Dendritic cell treated with granulocyte-macrophage colony-stimulating factor and Interleukin-4, amounts not matched to agents 40 ng/mL and 50 ng/mL, for 4 days (primary cell): ENCODE measurements at regions of chr4 and their contacts with region 1.

Region 1: GRCh38 chr4:157217708-157218107 is 2.8 kb upstream of the GRIA2 start:
- H3K4me3 Mint-ChIP-seq: no peak overlapping the region
- H3K27ac Mint-ChIP-seq: no peak overlapping the region
- H3K4me1 Mint-ChIP-seq: peaks cover 11% of the 10 kb centered on the region
- H3K27me3 Mint-ChIP-seq: peaks cover 37% of the 10 kb centered on the region

Region 2: DNA sequence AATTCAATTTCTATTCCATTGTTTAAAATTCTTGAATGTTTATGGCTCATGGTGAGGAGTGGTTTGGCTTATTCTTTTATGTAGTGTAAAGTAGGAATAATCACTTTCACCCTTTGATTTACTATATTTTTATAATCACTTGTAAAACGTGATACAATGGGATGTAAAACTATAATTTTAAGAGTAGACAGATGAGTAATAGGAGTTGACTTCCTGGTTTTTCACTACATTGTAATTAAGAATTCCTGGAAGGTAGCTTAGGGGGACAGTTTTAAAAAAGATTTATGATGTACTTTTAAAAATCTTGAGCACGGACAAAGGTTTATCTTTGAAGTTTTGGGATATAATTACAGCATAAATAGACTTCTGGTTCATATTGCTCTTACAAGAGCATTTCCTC is 311.4 kb before region 1 on chr4:
- intact Hi-C with region 1: no loop called
- H3K4me3 Mint-ChIP-seq: no peak overlapping the region
- H3K27ac Mint-ChIP-seq: no peak overlapping the region
- H3K4me1 Mint-ChIP-seq: peaks cover 21% of the 10 kb centered on the region
- H3K27me3 Mint-ChIP-seq: no peaks in the 10 kb centered on the region

Region 3: DNA sequence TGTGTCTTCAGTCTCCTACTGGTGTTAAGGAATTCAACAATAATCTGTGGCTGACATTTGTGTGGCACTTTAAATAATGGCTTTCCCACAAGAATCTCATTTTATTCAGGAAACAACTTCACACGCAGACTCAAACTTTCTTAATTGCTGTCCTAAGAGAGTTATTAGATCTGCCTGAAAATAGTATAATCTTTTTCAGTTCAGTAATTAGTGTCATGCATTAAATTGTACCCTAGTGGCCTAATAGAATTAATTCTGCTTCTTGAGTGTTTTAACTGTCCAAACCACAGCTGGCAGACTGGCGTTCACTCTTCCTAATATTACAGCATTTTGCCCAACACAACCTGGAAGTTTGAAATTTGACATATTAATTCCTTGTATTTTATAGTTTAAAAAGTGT is 110.0 kb after region 1 on chr4:
- intact Hi-C with region 1: no loop called
- H3K4me3 Mint-ChIP-seq: no peak overlapping the region
- H3K27ac Mint-ChIP-seq: no peak overlapping the region
- H3K4me1 Mint-ChIP-seq: no peaks in the 10 kb centered on the region
- H3K27me3 Mint-ChIP-seq: no peaks in the 10 kb centered on the region

Region 4: GRCh38 chr4:157978680-157979361 is 761.1 kb after region 1 on chr4:
- intact Hi-C with region 1: loop called (anchors 2 kb)
- H3K4me3 Mint-ChIP-seq: peak overlapping the region; percentile 28
- H3K27ac Mint-ChIP-seq: no peak overlapping the region
- H3K4me1 Mint-ChIP-seq: peaks cover 16% of the 10 kb centered on the region
- H3K27me3 Mint-ChIP-seq: peaks cover 2% of the 10 kb centered on the region

Region 5: DNA sequence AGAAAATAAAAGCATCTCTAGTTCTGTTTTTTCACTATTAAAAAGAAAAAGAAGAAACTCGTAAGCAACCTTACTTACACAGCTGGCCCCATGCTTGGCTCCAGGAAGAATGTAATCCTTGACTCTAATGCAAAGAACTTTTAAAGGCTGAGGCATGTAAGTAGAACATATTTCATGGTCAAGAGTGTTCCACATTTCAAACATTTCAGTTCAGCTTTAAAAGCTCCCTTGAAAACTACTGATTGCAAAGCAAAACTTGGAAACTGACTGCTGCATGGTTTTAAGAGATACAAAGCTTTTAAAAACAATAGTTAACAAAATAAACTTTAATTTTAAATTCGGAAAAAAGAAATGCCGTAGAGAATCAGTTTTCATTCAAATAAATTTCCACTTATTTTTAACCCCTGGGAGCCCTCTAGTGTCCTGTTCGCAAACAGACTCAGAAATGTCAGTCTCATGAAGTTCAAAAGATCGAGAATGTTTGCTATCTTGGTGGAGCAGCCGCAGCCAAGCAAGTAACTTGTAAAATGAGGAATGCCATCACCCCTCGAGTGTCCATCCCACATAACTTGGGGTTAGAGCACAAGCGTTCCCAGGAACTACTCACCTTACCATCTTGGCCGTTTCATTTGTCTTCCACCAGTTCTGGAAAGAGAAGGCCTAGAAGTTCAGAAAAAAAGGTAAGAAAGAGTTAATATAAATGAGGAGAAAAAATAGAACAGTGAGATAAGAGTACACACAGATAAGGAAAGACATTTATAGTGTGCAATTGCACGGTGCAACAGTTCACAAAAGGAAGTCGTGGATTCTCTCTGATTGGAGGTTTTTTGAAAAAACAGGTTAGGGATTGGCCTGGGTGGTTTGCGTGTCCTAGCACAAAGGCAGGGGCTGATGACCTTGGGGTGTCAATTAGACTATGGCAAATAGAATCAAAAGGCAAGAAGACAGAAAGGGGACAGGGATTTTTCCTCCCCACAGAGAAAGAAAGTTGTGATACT is 954.9 kb after region 1 on chr4 and contains the start of gene GASK1B:
- intact Hi-C with region 1: loop called (anchors 5 kb)
- H3K4me3 Mint-ChIP-seq: peak within 1 kb of the TSS; percentile 78
- H3K27ac Mint-ChIP-seq: peak within 1 kb of the TSS; percentile 83
- H3K4me1 Mint-ChIP-seq: peaks cover 58% of the 10 kb centered on the region
- H3K27me3 Mint-ChIP-seq: no peaks in the 10 kb centered on the region